ENCODE measurements at regions of chr5 and their contacts with region 1.

Region 1: DNA sequence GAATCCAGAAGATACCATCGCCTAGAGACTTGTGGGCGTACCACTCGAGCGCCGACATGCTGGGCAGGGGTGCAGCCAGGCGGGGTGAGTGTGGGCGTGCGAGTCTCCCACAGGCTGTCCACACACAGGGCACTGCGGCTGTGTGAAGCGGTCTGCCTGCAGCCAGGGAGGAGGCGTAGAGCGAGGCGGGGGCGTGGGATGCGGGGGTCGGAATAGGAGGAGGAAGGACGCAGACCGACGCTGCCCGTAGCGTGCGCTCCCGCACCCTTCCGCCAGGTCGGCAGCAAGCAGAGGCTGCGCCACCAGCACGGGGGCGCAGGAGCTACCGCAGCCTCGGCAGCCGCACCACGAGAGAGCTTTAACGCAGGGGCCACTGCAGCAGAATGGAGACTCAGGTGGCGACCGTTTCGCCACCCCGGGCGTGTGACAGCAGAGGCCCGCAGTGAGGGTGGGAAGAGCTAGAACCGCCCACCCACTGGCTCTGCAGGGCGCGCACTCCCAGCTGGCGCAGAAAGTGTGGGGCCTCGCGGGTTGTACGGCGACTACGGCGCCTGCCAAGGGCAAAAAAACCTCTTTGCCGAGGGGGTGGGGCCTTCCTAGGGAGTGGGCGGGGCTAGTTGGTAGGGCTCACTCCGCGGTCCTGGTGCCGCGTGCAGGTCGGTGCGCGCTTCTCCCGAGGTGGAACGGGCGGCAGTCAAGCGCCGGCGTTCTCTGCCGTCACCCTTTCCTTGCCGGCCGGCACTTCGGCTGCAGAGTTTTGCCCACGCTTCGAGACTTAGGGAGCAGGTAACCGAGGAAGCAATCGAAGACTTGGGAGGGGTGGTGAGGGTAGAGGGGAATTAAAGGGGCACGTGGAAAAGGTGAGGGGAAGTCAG is at the starts of genes MBLAC2 and POLR3G:
- DNase-seq: peak; percentile 93
- H3K4me3 ChIP-seq: peak within 1 kb of the TSS; percentile 80
- H3K27ac ChIP-seq: peak within 1 kb of the TSS; percentile 59
- H3K4me1 ChIP-seq: peaks cover 41% of the 10 kb centered on the region
- CTCF ChIP-seq: peak; percentile 45
- total RNA-seq, gene MBLAC2: 9.1 and 9.4 TPM in 2 replicates
- total RNA-seq, gene POLR3G: 9.9 and 14.6 TPM in 2 replicates

Region 2: DNA sequence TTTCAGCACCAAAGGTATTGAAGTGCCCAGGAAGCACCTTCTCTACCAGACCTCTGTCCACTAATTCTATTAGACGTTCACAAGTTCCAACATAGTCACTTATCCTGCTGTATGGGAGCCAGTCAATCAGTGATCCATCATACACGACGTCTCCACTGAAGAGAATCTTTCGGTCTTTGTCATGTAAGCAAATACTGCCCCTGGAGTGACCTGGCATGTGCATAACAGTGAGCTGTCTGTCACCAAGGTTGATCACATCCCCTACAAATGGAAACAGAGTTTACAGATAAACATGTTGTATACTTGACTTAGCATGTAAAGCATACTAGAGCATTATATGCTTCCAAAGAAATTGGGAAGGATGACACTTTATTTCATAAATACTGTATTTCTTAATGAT is 13.2 kb before region 1 on chr5:
- CTCF ChIA-PET with region 1: interaction called, 3 read pairs
- POLR2A ChIA-PET with region 1: interaction called, 24 read pairs
- intact Hi-C with region 1: no loop called
- DNase-seq: no peak
- H3K4me3 ChIP-seq: no peak overlapping the region
- H3K27ac ChIP-seq: no peak overlapping the region
- H3K4me1 ChIP-seq: no peaks in the 10 kb centered on the region
- CTCF ChIP-seq: no peak

Region 3: GRCh38 chr5:90503596-90503995 is 29.1 kb after region 1 on chr5:
- CTCF ChIA-PET with region 1: no interaction called
- POLR2A ChIA-PET with region 1: interaction called, 13 read pairs
- intact Hi-C with region 1: no loop called
- DNase-seq: no peak
- H3K4me3 ChIP-seq: no peak overlapping the region
- H3K27ac ChIP-seq: no peak overlapping the region
- H3K4me1 ChIP-seq: peaks cover 3% of the 10 kb centered on the region
- CTCF ChIP-seq: no peak

Measured in OCI-LY7 (cell line).